ENCODE measurements at regions of chr19 and their contacts with region 1.

Region 1: DNA sequence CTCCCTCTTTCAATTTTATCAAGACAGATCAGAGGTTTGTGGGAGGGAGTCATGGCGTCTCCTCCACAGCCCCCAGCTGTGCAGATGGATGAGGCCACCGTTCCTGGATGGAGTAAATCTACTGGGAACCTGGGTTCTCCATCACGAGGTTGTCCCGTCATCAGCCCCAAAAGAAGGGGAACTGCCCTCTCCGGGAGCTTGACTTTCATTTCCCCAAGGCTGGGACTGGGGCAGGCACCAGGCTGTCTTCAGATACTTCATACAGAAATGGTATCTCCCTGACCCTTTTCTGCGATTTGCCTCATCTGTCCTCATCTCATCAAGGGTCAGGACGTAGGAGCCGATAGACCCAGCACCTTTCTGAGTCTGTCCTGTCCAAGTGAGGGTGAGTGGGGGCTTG is 9.8 kb downstream of the LILRB2 start:
- DNase-seq: no peak
- H3K4me3 ChIP-seq: no peak overlapping the region
- H3K27ac ChIP-seq: no peak overlapping the region
- H3K4me1 ChIP-seq: no peaks in the 10 kb centered on the region
- H3K27me3 ChIP-seq: no peaks in the 10 kb centered on the region
- CTCF ChIP-seq: no peak
- POLR2A ChIP-seq: no peak

Region 2: GRCh38 chr19:53989600-53990533 is 281.2 kb before region 1 on chr19:
- intact Hi-C with region 1: loop called (anchors 5 kb)
- DNase-seq: no peak
- H3K4me3 ChIP-seq: no peak overlapping the region
- H3K27ac ChIP-seq: no peak overlapping the region
- H3K4me1 ChIP-seq: peaks cover 12% of the 10 kb centered on the region
- H3K27me3 ChIP-seq: peaks cover 21% of the 10 kb centered on the region
- CTCF ChIP-seq: no peak
- POLR2A ChIP-seq: no peak

Region 3: GRCh38 chr19:54179921-54180461 is 91.1 kb before region 1 on chr19:
- intact Hi-C with region 1: no loop called
- DNase-seq: no peak
- H3K4me3 ChIP-seq: no peak overlapping the region
- H3K27ac ChIP-seq: no peak overlapping the region
- H3K4me1 ChIP-seq: no peaks in the 10 kb centered on the region
- H3K27me3 ChIP-seq: no peaks in the 10 kb centered on the region
- CTCF ChIP-seq: no peak
- POLR2A ChIP-seq: no peak

Region 4: GRCh38 chr19:54257116-54257480 is 14.0 kb before region 1 on chr19 and contains the start of gene LILRB5:
- intact Hi-C with region 1: no loop called
- DNase-seq: no peak
- H3K4me3 ChIP-seq: no peak within 1 kb of the TSS
- H3K27ac ChIP-seq: no peak within 1 kb of the TSS
- H3K4me1 ChIP-seq: no peaks in the 10 kb centered on the region
- H3K27me3 ChIP-seq: no peaks in the 10 kb centered on the region
- CTCF ChIP-seq: no peak
- POLR2A ChIP-seq: no peak
- total RNA-seq, gene LILRB5: 12.3 TPM